Activated B cell treated with CpG ODN at 0.5 μM for 24 hours (primary cell): ENCODE measurements at regions of chr11 and their contacts with region 1.

Region 1: GRCh38 chr11:76919887-76920746 is 59.4 kb downstream of the ACER3 start:
- DNase-seq: peak; percentile 30
- ATAC-seq: peak; percentile 76
- H3K4me3 Mint-ChIP-seq: peak overlapping the region; percentile 67
- H3K27ac Mint-ChIP-seq: no peak overlapping the region
- H3K4me1 Mint-ChIP-seq: peaks cover 7% of the 10 kb centered on the region
- H3K27me3 Mint-ChIP-seq: no peaks in the 10 kb centered on the region
- CTCF ChIP-seq: peak; percentile 80

Region 2: GRCh38 chr11:76721755-76722677 is 198.1 kb before region 1 on chr11:
- CTCF ChIA-PET with region 1: interaction called, 11 read pairs
- POLR2A ChIA-PET with region 1: no interaction called
- intact Hi-C with region 1: no loop called
- DNase-seq: peak; percentile 66
- ATAC-seq: peak; percentile 95
- H3K4me3 Mint-ChIP-seq: no peak overlapping the region
- H3K27ac Mint-ChIP-seq: no peak overlapping the region
- H3K4me1 Mint-ChIP-seq: peaks cover 5% of the 10 kb centered on the region
- H3K27me3 Mint-ChIP-seq: peaks cover 38% of the 10 kb centered on the region
- CTCF ChIP-seq: peak; percentile 2

Region 3: GRCh38 chr11:76799066-76799804 is 120.9 kb before region 1 on chr11:
- CTCF ChIA-PET with region 1: interaction called, 24 read pairs
- POLR2A ChIA-PET with region 1: no interaction called
- intact Hi-C with region 1: no loop called
- DNase-seq: peak; percentile 71
- ATAC-seq: peak; percentile 99
- H3K4me3 Mint-ChIP-seq: peak overlapping the region; percentile 53
- H3K27ac Mint-ChIP-seq: no peak overlapping the region
- H3K4me1 Mint-ChIP-seq: peaks cover 8% of the 10 kb centered on the region
- H3K27me3 Mint-ChIP-seq: peaks cover 13% of the 10 kb centered on the region
- CTCF ChIP-seq: no peak

Region 4: GRCh38 chr11:76860539-76861475 is 59.3 kb before region 1 on chr11 and contains the start of gene ACER3:
- CTCF ChIA-PET with region 1: interaction called, 4 read pairs
- POLR2A ChIA-PET with region 1: no interaction called
- intact Hi-C with region 1: loop called (anchors 2 kb)
- DNase-seq: peak; percentile 89
- ATAC-seq: peak; percentile 99
- H3K4me3 Mint-ChIP-seq: peak within 1 kb of the TSS; percentile 89
- H3K27ac Mint-ChIP-seq: peak within 1 kb of the TSS; percentile 84
- H3K4me1 Mint-ChIP-seq: peaks cover 45% of the 10 kb centered on the region
- H3K27me3 Mint-ChIP-seq: no peaks in the 10 kb centered on the region
- CTCF ChIP-seq: no peak
- total RNA-seq, gene ACER3: 11.8 and 12.4 TPM in 2 replicates

Region 5: DNA sequence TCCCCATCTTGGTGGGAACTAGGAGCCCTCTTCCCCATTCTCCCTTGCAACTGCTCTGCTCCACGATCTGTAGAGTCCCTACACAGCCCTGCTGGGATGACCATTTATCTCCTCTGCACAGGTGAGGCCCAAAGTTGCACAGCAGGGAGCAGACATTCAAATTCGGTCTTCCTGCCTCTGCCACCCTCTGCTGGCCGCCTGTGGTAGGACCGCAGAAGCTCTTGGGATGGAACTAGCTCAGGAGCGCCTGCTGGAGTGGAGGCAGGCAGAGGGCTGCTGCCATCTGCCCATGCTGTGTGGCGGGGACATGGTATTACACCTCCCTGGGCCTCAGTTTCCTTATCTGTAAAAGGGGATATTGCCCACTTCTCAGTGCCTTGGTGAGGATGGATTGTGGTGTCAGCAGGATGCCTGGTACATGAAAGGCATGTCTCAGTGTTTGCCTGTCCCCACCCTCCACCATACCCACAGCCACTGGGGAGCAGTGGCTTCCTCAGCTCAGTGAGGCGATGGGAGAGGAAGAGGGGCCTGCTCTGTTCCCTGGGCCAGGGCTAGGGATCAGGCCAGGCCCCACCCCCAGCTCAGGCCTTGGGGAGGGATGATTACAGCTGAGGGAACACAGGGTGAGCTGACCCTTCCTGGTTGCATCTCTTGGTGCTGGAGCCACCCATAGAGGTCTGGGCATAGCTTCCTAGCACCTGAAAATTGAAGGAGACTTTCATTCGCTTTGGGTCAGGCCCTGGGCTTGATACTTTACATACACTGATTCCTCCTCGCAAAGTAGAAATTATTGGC is 171.2 kb after region 1 on chr11:
- CTCF ChIA-PET with region 1: interaction called, 52 read pairs
- POLR2A ChIA-PET with region 1: no interaction called
- intact Hi-C with region 1: loop called (anchors 1 kb)
- DNase-seq: peak; percentile 61
- ATAC-seq: peak; percentile 98
- H3K4me3 Mint-ChIP-seq: no peak overlapping the region
- H3K27ac Mint-ChIP-seq: no peak overlapping the region
- H3K4me1 Mint-ChIP-seq: no peaks in the 10 kb centered on the region
- H3K27me3 Mint-ChIP-seq: no peaks in the 10 kb centered on the region
- CTCF ChIP-seq: peak; percentile 39

Region 6: DNA sequence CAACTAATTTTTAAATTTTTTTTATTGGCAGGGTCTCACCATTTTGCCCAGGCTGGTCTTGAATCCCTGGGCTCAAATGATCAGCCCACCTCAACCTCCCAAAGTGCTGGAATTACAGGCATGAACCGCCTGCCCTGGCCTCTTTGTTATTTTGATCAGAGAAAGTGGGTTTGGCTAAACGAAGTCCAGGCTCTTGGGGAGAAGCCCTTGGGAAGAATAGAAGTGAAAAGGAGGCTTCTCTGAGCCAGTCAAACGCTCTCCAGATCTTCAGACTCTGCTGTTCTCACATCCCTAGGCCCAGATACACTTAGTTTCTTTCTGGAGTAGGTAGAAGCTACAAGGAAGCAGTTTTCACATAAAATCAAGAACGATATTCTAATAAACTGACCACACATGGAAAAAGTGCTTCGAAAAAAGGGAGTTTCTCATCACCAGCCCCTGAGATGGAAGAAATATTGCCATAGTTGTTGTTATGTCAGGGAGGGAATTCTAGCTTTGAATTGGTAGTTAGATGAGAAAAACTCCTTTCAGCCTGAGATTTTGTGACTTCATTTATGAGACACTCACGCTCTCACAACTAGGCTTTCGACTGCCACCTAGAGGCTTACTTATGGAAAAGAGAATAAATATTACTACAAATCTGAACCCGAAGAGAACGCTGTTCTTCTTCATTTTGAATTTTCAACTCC is 627.9 kb after region 1 on chr11:
- CTCF ChIA-PET with region 1: no interaction called
- POLR2A ChIA-PET with region 1: no interaction called
- intact Hi-C with region 1: loop called (anchors 5 kb)
- DNase-seq: no peak
- ATAC-seq: peak; percentile 42
- H3K4me3 Mint-ChIP-seq: no peak overlapping the region
- H3K27ac Mint-ChIP-seq: no peak overlapping the region
- H3K4me1 Mint-ChIP-seq: peaks cover 2% of the 10 kb centered on the region
- H3K27me3 Mint-ChIP-seq: no peaks in the 10 kb centered on the region
- CTCF ChIP-seq: peak; percentile 70